ENCODE measurements at regions of chr11 and their contacts with region 1.

Region 1: GRCh38 chr11:9180784-9181183 is 84.4 kb downstream of the DENND5A start:
- DNase-seq: no peak
- CTCF ChIP-seq: no peak

Region 2: GRCh38 chr11:9280655-9281301 is 100.0 kb after region 1 on chr11:
- in situ Hi-C with region 1: loop called (anchors 25 kb)
- DNase-seq: peak; percentile 55
- CTCF ChIP-seq: no peak

Region 3: GRCh38 chr11:9493492-9493891 is 312.7 kb after region 1 on chr11:
- in situ Hi-C with region 1: loop called (anchors 10 kb)
- DNase-seq: no peak
- CTCF ChIP-seq: no peak